PC-3 (cell line): ENCODE measurements at regions of chr18 and their contacts with region 1.

Region 1: DNA sequence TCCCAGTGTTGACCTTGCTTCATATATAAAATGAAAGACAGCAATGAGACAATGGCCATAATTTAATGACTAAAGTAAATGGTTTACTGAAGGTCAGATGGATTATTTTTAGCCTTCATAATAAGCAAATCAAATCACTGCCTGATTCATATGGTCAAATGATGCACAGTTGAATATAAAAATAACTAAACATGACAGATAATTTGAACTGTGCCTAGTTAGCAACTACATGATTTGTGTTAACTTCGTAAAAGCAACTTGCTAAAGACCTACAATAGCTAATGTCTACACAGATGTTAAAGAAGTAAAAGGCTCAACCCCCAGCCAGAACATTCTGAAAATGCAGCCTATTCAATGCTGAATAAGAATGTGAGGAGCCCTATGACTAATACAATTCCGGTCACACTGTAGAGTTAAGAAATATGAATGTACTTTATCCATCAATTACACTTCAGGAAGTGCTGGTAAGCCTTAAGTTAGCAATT is 590.8 kb upstream of the CDH2 start:
- DNase-seq: peak; percentile 63
- ATAC-seq: peak; percentile 76
- H3K4me3 ChIP-seq: no peak overlapping the region
- H3K27ac ChIP-seq: peak overlapping the region; percentile 32
- H3K4me1 ChIP-seq: peaks cover 33% of the 10 kb centered on the region
- H3K27me3 ChIP-seq: no peaks in the 10 kb centered on the region
- CTCF ChIP-seq: no peak

Region 2: DNA sequence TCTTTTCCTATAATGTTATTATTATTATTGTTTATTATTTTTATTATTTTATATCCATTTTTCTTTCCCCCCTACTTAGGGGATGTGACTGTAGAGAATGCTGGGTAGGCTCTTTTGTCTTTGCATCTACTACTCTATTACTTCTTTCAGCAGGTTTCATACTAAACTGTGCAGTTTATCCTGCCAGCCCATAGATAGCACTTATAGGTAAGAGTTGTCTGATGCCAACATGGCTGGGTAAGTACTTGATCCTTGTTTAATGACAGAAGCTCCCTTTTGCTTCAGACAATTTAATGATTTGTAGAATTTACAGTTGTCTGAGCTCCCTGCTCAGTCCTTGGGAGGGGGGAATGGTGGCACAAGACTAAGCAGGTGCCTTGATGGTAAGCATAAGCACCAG is 327.9 kb before region 1 on chr18:
- CTCF ChIA-PET with region 1: no interaction called
- POLR2A ChIA-PET with region 1: no interaction called
- intact Hi-C with region 1: loop called (anchors 10 kb)
- DNase-seq: peak; percentile 44
- ATAC-seq: no peak; the same call in 1 of the 2 replicates
- H3K4me3 ChIP-seq: no peak overlapping the region
- H3K27ac ChIP-seq: no peak overlapping the region
- H3K4me1 ChIP-seq: no peaks in the 10 kb centered on the region
- H3K27me3 ChIP-seq: no peaks in the 10 kb centered on the region
- CTCF ChIP-seq: peak; percentile 58

Region 3: GRCh38 chr18:28512357-28512756 is 255.4 kb before region 1 on chr18:
- CTCF ChIA-PET with region 1: no interaction called
- POLR2A ChIA-PET with region 1: no interaction called
- intact Hi-C with region 1: loop called (anchors 5 kb)
- DNase-seq: no peak
- ATAC-seq: no peak
- H3K4me3 ChIP-seq: no peak overlapping the region
- H3K27ac ChIP-seq: no peak overlapping the region
- H3K4me1 ChIP-seq: peaks cover 21% of the 10 kb centered on the region
- H3K27me3 ChIP-seq: no peaks in the 10 kb centered on the region
- CTCF ChIP-seq: no peak

Region 4: GRCh38 chr18:28657966-28658365 is 109.8 kb before region 1 on chr18:
- CTCF ChIA-PET with region 1: no interaction called
- POLR2A ChIA-PET with region 1: no interaction called
- intact Hi-C with region 1: loop called (anchors 5 kb)
- DNase-seq: peak; percentile 55
- ATAC-seq: peak; percentile 67
- H3K4me3 ChIP-seq: no peak overlapping the region
- H3K27ac ChIP-seq: no peak overlapping the region
- H3K4me1 ChIP-seq: peaks cover 22% of the 10 kb centered on the region
- H3K27me3 ChIP-seq: no peaks in the 10 kb centered on the region
- CTCF ChIP-seq: no peak

Region 5: GRCh38 chr18:28961669-28962228 is 194.0 kb after region 1 on chr18:
- CTCF ChIA-PET with region 1: no interaction called
- POLR2A ChIA-PET with region 1: no interaction called
- intact Hi-C with region 1: loop called (anchors 5 kb)
- DNase-seq: peak; percentile 73
- ATAC-seq: peak; percentile 55
- H3K4me3 ChIP-seq: no peak overlapping the region
- H3K27ac ChIP-seq: no peak overlapping the region
- H3K4me1 ChIP-seq: peaks cover 17% of the 10 kb centered on the region
- H3K27me3 ChIP-seq: no peaks in the 10 kb centered on the region
- CTCF ChIP-seq: peak; percentile 76